ENCODE measurements at regions of chr1 and their contacts with region 1.

Region 1: DNA sequence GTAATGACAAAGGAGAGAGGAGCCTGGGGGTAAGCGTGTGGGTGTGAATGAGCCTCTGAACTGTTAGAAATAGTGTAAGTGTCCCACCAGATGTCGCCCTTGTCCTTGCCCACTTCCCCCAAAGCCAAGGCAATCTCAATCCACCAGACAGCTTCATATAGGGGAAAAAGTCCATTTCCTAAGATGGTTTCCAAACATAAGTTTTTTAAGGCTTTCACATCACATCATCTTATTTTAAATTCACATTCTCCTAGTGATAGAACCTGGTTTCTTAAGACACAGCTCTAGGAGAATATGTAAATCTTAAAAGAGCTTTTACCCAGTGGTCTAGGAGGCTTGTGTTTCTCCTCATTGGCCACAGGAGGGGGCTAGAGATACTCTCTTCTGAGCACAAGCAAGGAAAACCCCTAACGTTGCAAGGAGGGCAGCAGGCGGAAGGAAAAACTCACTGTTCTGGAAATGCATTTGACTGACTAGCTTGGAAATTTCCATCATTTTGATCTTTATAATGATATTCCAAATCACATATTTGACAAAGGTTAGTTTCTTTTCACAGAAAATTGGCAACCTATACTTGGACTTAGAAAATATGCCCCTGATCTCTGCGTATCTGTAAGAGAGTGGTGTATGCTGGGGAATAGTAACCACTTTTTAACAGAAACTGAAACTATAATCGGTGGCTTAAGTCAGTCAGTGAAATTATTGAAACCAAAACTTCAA is 51.9 kb upstream of the LPAR3 start:
- DNase-seq: peak; percentile 86
- H3K4me3 Mint-ChIP-seq: peak overlapping the region; percentile 56
- H3K27ac Mint-ChIP-seq: peak overlapping the region; percentile 70
- H3K4me1 Mint-ChIP-seq: no peaks in the 10 kb centered on the region
- H3K27me3 Mint-ChIP-seq: no peaks in the 10 kb centered on the region
- CTCF ChIP-seq: peak; percentile 81

Region 2: DNA sequence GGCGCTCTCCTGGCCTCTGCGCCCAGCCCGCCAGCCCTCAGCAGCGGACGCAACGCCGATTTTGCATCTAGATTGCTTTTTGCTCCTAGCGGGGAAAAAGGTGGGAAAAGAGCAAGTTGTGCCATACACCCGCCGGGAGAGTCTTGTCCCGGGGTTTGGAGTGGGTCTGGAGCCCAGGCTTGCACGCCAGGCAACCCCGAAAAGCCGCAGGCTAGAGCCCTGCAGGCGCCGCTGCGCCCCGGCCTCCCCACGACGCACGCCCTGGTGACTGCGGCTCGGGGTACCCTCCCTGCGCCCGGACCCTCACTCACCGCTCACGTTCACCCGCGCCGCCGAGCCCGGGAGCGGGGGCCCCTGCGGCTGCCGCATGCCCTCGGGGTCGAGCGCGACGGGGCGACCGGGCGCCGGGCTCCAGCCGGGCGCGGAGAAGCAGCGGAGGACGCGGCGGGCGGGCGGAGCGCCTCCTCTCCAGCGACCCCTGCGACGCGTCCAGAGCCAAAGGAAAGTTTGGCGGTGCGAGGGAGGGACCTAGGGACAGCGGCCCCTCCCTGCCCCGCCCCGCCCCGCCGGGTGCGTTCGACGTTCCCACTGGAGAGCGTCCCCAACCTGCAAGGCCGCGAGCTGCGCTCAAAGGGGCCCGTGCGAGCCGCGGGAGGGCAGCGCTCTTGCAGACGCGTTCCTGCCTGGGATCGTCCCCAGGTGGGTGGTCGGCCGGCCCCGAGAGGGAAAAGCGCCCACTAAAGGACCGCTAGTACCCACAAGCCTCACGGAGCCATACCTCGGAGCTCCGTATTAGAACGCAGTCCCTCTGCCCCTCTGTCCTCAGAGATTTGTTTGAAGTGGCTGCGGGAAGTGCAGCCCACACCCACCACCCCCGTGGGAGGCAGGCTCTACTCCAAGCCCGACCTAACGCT is 52.0 kb before region 1 on chr1 and contains the start of gene LPAR3:
- CTCF ChIA-PET with region 1: no interaction called
- intact Hi-C with region 1: no loop called
- DNase-seq: peak; percentile 78
- H3K4me3 Mint-ChIP-seq: peak within 1 kb of the TSS; percentile 79
- H3K27ac Mint-ChIP-seq: peak within 1 kb of the TSS; percentile 55
- H3K4me1 Mint-ChIP-seq: peaks cover 42% of the 10 kb centered on the region
- H3K27me3 Mint-ChIP-seq: no peaks in the 10 kb centered on the region
- CTCF ChIP-seq: no peak
- total RNA-seq, gene LPAR3: 13.2 and 14.0 TPM in 2 replicates

Region 3: DNA sequence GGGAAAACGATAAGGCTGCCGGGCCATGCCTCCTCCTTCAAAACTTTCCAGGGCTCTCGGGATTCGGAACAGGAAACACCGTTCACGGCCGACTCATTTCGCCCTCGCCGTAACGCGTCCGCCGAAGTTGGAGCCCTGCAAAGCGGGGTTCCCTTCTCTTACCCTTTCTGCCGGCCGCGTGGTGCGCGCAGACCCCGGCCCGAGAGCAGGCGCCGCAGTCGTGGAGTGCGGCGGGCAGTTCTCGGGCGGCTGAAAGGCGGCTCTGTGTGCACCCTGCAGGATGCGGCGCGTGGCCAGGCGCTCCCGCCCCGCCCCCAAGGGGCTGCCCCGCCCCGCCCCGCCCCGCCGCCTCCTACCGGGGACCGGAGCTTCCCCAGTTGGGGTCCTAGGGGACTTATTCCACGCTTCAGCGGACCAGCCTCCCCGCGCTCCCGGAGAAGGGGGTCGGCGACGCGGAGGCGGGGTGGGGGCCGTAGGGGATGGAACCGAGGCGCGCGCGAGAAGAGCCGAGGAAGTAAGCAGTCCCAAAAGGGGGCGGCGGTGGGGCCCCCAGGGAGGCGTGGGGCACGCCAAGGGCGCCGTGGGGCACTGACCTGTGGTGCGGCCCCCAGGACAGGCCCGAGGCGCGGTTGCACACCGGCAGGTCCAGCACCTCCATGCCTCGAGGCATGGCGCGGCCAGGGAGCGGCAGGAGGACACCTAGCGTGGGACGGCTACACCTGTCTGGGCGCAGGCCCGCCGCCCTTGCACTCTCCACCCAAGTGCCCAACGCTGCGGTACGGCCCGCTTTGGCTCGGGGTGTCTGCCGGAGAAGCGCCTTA is 52.1 kb after region 1 on chr1 and contains the start of gene MCOLN2:
- CTCF ChIA-PET with region 1: interaction called, 11 read pairs
- intact Hi-C with region 1: no loop called
- DNase-seq: peak; percentile 66
- H3K4me3 Mint-ChIP-seq: peak within 1 kb of the TSS; percentile 96
- H3K27ac Mint-ChIP-seq: peak within 1 kb of the TSS; percentile 54
- H3K4me1 Mint-ChIP-seq: peaks cover 18% of the 10 kb centered on the region
- H3K27me3 Mint-ChIP-seq: peaks cover 13% of the 10 kb centered on the region
- CTCF ChIP-seq: no peak
- total RNA-seq, gene MCOLN2: 12.2 and 12.6 TPM in 2 replicates

Region 4: DNA sequence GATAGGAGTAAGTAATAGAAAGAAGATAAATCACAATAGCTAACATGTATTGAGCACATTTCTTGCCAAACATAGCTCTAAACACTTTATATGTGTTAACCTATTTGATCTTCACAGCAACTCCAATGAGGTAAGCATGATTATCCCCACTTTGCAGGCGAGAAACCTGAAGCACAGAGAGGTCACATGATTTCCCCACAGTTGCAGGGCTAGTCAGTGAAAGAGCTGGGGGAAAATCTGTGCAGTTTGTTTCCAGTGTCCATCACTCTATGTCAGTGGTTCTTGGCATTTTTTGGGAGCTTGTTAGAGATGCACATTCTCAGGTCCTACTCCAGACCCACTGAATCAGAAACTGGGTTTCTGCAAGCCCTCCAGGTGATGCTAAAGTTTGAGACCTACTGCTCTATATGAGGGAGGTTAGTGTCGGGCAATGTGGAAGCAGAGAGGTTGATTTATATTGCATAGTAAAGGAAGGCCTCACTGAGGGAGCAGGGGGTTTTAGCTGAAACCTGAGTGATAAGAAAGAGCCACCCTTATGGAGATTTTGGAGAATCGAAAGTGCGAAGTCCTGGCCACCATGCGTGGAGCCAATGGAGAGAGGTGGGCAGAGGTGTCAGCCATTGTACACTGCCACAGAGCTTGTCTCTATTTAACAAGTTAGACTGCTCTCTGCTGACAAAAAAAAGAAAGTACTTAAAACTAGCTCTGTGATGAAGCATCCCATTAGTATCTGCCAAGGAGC is 82.5 kb after region 1 on chr1:
- CTCF ChIA-PET with region 1: interaction called, 47 read pairs
- intact Hi-C with region 1: loop called (anchors 1 kb)
- DNase-seq: no peak
- H3K4me3 Mint-ChIP-seq: no peak overlapping the region
- H3K27ac Mint-ChIP-seq: no peak overlapping the region
- H3K4me1 Mint-ChIP-seq: no peaks in the 10 kb centered on the region
- H3K27me3 Mint-ChIP-seq: no peaks in the 10 kb centered on the region
- CTCF ChIP-seq: no peak

Region 5: DNA sequence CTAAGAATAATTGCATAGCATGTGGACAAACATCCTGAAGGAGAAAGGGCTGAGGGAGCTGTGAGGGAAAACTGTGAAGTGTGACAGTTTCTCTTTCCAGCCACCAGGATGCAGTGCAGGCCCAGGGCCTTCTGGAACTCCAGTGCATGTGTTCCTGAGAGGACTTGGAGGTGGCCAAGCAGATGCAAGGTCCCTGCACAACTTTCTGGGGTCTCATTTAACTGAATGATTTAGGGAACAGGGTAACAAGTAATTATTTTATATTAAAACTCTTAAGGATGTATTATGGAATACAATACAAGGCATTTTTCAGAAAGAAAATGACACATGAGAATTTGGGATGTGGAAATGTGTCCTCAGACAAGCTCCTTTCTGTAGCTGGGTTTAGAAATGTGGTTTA is 164.5 kb after region 1 on chr1:
- CTCF ChIA-PET with region 1: interaction called, 22 read pairs
- intact Hi-C with region 1: loop called (anchors 2 kb)
- DNase-seq: peak; percentile 58
- H3K4me3 Mint-ChIP-seq: no peak overlapping the region
- H3K27ac Mint-ChIP-seq: no peak overlapping the region
- H3K4me1 Mint-ChIP-seq: no peaks in the 10 kb centered on the region
- H3K27me3 Mint-ChIP-seq: no peaks in the 10 kb centered on the region
- CTCF ChIP-seq: peak; percentile 86

Region 6: DNA sequence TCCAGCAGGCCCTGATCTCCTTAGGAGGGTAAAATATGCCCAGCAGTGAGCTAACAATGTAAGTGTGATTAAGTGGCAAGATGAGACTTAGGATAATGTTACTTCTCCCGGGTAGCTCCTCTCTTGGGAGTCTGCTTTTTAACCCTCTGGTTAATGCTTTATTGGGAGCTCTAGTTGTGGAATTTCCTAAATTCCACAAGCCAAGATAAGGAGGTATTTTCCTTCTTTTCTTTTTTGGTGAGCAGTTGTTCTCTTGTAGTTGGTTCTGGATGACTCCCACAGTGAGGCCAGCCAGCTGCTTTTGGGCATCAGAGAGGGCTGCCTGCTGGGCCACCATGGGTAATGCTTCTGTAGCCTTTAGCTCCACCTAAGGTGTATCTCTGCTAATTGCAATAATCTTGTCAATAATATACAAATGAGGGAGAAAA is 295.3 kb after region 1 on chr1:
- CTCF ChIA-PET with region 1: interaction called, 26 read pairs
- intact Hi-C with region 1: loop called (anchors 1 kb)
- DNase-seq: peak; percentile 26
- H3K4me3 Mint-ChIP-seq: no peak overlapping the region
- H3K27ac Mint-ChIP-seq: no peak overlapping the region
- H3K4me1 Mint-ChIP-seq: no peaks in the 10 kb centered on the region
- H3K27me3 Mint-ChIP-seq: no peaks in the 10 kb centered on the region
- CTCF ChIP-seq: no peak

Measured in Calu3 (cell line).